B cell (primary cell): ENCODE measurements at regions of chr19 and their contacts with region 1.

Region 1: GRCh38 chr19:50817941-50818858 is 5.4 kb downstream of the KLK1 start:
- DNase-seq: peak; percentile 77
- ATAC-seq: peak; percentile 69
- H3K4me3 ChIP-seq: peak overlapping the region in 4 of 5 experiments; percentile 60 to 76 (median 67)
- H3K4me3 Mint-ChIP-seq: peak overlapping the region; percentile 93
- H3K27ac ChIP-seq: peak overlapping the region in 1 of 2 donors; percentile 29
- H3K27ac Mint-ChIP-seq: peak overlapping the region; percentile 90
- H3K4me1 ChIP-seq: peaks cover 45 to 53% of the 10 kb centered on the region in 2 donors
- H3K4me1 Mint-ChIP-seq: peaks cover 63% of the 10 kb centered on the region
- H3K27me3 ChIP-seq: peaks cover 0 to 36% (median 2%) of the 10 kb centered on the region in 4 experiments
- H3K27me3 Mint-ChIP-seq: peaks cover 22% of the 10 kb centered on the region
- CTCF ChIP-seq: no peak

Region 2: DNA sequence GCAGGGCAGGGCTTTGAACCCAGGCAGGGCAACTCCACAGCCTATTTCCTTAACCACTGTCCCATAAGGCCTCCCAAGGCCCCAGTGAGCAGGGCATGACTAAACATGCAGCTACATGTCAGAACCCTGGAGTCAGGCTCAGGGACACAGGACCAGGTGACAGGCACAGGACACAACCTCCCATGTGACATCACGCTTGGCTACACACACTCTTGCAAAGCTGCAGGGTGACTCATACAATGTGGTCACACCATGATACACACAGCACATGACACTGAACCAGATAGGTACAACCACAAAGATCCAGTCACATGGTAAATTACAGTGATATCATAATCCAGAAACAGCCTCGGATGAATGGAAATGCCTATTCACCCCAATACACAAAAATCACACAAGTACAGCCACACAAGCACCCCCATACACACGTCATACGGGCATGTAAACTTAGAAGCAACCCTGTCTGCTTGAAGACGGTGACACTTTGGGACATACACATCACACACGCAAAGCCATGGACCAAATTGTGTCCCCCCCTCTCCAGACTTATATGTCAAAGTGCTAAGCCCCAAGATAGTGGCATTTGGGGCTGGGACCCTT is 78.5 kb after region 1 on chr19:
- CTCF ChIA-PET with region 1: no interaction called
- POLR2A ChIA-PET with region 1: no interaction called
- intact Hi-C with region 1: loop called (anchors 5 kb)
- DNase-seq: peak; percentile 90
- ATAC-seq: peak; percentile 90
- H3K4me3 ChIP-seq: no peak overlapping the region
- H3K4me3 Mint-ChIP-seq: peak overlapping the region; percentile 66
- H3K27ac ChIP-seq: peak overlapping the region; percentile 78 to 84
- H3K27ac Mint-ChIP-seq: peak overlapping the region; percentile 94
- H3K4me1 ChIP-seq: peaks cover 20 to 26% of the 10 kb centered on the region in 2 donors
- H3K4me1 Mint-ChIP-seq: peaks cover 53% of the 10 kb centered on the region
- H3K27me3 ChIP-seq: no peaks in the 10 kb centered on the region
- H3K27me3 Mint-ChIP-seq: no peaks in the 10 kb centered on the region
- CTCF ChIP-seq: no peak